Testis (tissue), 5 donors: ENCODE measurements at regions of chr12 and their contacts with region 1.

Region 1: GRCh38 chr12:6280053-6280469 is 30.4 kb upstream of the PLEKHG6 start:
- DNase-seq: no peak
- H3K4me3 ChIP-seq: no peak overlapping the region
- H3K27ac ChIP-seq: no peak overlapping the region
- H3K4me1 ChIP-seq: peaks cover 17% of the 10 kb centered on the region
- H3K27me3 ChIP-seq: no peaks in the 10 kb centered on the region
- CTCF ChIP-seq: no peak
- POLR2A ChIP-seq: no peak

Region 2: GRCh38 chr12:6056406-6057240 is 223.4 kb before region 1 on chr12:
- intact Hi-C with region 1: loop called (anchors 5 kb)
- DNase-seq: no peak
- H3K4me3 ChIP-seq: peak overlapping the region in 1 of 2 donors; percentile 34
- H3K27ac ChIP-seq: no peak overlapping the region
- H3K4me1 ChIP-seq: peaks cover 13% of the 10 kb centered on the region
- H3K27me3 ChIP-seq: no peaks in the 10 kb centered on the region
- CTCF ChIP-seq: no peak
- POLR2A ChIP-seq: no peak

Region 3: DNA sequence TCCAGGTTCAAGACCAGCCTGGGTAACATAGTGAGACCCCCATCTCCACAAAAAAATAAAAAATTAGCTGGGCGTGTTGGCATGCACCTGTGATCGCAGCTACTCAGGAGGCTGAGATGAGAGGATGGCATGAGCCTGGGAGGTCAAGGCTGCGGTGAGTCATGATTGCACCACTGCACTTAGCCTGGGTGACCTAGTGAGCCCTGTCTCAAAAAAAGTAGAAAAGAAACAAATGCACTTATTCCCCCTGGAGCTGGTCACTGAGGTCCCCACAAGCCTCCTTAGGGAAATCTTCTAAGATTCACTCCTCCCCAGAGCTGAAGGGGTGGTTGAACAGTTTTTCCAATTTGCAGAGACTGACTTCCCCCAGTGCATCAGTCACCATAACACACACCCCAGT is 78.2 kb before region 1 on chr12:
- intact Hi-C with region 1: loop called (anchors 2 kb)
- DNase-seq: no peak
- H3K4me3 ChIP-seq: no peak overlapping the region
- H3K27ac ChIP-seq: peak overlapping the region in 1 of 2 donors; percentile 83
- H3K4me1 ChIP-seq: peaks cover 22% of the 10 kb centered on the region
- H3K27me3 ChIP-seq: no peaks in the 10 kb centered on the region
- CTCF ChIP-seq: no peak
- POLR2A ChIP-seq: no peak